A549 (cell line): ENCODE measurements at regions of chr19 and their contacts with region 1.

Region 1: DNA sequence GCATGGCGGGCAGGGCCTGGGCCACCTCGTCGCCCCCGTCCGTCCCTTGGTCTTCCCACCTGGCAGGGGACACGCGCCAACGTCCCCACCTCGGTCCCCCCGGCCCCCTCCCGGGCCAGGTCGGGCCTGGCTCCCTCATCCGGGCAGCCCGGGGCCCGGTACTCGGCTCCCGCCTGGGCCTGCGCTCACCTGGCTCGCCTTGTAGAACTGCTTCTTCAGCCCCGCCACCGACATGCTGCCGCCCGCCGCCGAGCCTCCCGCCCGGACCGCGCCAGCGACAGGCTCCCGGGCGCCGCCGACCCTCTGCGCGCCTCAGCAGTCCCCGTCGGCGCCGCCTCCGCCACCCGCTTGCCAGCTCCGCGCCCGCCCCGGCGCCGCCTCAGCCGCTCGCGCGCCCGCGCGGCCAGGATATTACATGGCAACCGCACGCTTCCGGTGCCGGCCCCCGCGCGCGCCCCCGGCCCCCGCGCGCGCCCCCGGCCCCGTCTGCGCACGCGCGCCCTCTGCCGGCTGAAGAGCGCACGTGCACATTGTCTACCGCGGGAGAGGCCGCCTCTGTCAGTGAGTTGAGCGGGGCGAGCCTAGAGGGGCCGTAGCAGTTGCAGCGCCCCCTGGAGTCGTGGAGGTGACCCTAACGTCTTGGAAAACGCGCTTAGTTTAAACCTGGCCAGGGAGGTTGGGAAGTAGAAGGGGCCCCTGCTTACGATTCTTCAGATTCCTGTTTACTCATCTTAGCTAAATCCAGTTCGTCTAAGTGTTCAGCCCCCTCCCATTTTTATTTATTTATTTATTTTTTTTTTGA is at the start of gene SH3GL1:
- DNase-seq: peak; percentile 69 to 94
- ATAC-seq: peak; percentile 68 to 78
- H3K4me3 ChIP-seq: peak within 1 kb of the TSS; percentile 77
- H3K27ac ChIP-seq: peak within 1 kb of the TSS; percentile 88 to 99
- H3K4me1 ChIP-seq: peaks cover 26% of the 10 kb centered on the region
- CTCF ChIP-seq: peak; percentile 99
- EP300 ChIP-seq: no peak
- POLR2A ChIP-seq: peak; percentile 53
- RAD21 ChIP-seq: peak; percentile 39 to 68; a peak in 4 of 5 replicates
- polyA plus RNA-seq, gene SH3GL1: 18.2 and 20.1 TPM in 2 replicates

Region 2: DNA sequence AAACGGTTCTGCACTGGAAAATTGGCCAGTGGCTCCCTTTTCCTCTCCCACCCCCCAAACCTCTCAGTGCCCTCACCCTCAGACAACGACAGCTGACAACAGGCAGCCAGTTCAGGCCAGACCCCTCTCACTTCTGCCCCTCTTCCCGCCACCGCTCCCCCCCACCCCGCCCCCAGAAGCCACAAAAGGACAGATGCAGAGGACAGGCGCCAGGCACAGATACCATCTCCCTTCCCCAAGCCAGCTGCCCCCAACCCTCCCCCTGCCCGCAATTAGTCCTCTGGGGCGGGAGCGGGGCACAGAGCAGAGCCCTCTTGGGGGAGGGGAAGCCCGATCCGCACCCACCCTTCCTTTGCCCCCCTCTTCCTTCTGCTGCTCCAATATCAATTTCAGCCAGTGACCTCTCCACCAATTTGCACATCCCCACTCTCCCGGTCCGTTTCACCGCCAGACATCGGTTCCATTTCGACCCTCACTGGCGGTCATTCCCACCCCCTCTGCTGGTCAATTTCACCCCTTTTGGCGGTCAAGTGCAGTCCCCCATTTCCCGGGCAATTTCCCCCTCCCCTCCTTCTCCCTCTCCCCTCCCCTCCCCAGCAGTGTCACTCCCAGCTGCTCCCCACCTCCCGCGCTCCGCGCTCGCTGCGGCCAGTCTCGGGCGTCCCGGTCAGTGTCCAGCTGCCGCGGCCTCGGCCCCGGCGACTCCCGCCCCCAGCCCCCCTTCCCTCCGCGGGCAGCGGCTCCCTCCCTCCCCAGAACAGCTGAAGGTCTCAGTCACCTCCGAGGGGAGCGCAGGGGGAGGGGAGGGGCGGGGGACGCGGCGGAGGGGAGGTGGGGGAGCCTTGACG is 121.7 kb before region 1 on chr19 and contains the start of gene SHD:
- CTCF ChIA-PET with region 1: no interaction called
- POLR2A ChIA-PET with region 1: no interaction called
- DNase-seq: no peak
- ATAC-seq: peak; percentile 36 to 48; a peak in 2 of 6 replicates
- H3K4me3 ChIP-seq: peak within 1 kb of the TSS; percentile 47
- H3K27ac ChIP-seq: peak within 1 kb of the TSS in 1 of 2 experiments; percentile 67; a peak in 3 of 6 replicates
- H3K4me1 ChIP-seq: peaks cover 2% of the 10 kb centered on the region; the same call in 1 of the 3 replicates
- CTCF ChIP-seq: no peak
- EP300 ChIP-seq: no peak
- POLR2A ChIP-seq: no peak
- RAD21 ChIP-seq: no peak
- polyA plus RNA-seq, gene SHD: 0.08 and 0.29 TPM in 2 replicates

Region 3: DNA sequence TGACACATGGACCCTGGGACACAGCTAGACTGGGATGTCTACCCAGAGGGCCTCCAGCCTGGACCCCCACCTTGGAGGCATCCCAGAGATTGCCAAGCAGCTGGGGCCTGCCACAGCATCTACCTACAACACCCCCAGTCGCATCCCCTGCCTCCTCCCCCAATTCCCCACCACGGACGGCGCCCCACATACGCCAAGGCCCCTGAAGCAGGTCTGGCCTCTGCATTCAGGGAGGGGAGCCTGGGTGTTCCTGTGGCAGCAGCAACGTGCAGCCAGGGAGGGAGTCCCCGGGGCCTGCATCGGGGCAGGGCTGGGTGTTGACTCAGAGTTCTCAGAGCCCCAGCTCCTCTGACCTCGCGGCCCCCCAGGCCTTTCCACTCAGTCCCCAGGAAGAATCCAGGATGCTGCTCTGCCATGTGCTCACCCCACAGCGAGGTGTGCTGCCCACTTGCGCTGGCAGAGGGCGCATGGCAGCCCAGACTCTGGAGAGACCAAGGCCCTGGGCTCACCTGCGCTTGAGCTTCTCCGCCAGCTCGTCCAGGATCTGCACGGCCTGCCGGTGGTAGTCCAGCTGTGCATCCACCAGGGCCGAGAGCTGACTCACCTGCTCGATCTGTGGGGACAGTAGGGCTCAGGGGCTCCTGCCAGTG is 37.4 kb before region 1 on chr19:
- CTCF ChIA-PET with region 1: interaction called, 51 read pairs
- POLR2A ChIA-PET with region 1: no interaction called
- DNase-seq: peak in 1 of 2 experiments; percentile 47
- ATAC-seq: peak; percentile 48 to 68; a peak in 5 of 6 replicates
- H3K4me3 ChIP-seq: no peak overlapping the region
- H3K27ac ChIP-seq: peak overlapping the region in 1 of 2 experiments; percentile 59; a peak in 2 of 6 replicates
- H3K4me1 ChIP-seq: peaks cover 14% of the 10 kb centered on the region
- CTCF ChIP-seq: peak; percentile 32; the same call in 2 of the 3 replicates
- EP300 ChIP-seq: no peak
- POLR2A ChIP-seq: no peak
- RAD21 ChIP-seq: peak; percentile 17 to 19; a peak in 1 of 5 replicates

Region 4: GRCh38 chr19:4375164-4376027 is 24.9 kb before region 1 on chr19:
- CTCF ChIA-PET with region 1: interaction called, 45 read pairs
- POLR2A ChIA-PET with region 1: interaction called, 4 read pairs
- DNase-seq: peak in 1 of 2 experiments; percentile 60
- ATAC-seq: peak; percentile 48 to 68
- H3K4me3 ChIP-seq: no peak overlapping the region
- H3K27ac ChIP-seq: peak overlapping the region; percentile 99
- H3K4me1 ChIP-seq: peaks cover 68% of the 10 kb centered on the region
- CTCF ChIP-seq: no peak
- EP300 ChIP-seq: no peak
- POLR2A ChIP-seq: no peak
- RAD21 ChIP-seq: no peak

Region 5: DNA sequence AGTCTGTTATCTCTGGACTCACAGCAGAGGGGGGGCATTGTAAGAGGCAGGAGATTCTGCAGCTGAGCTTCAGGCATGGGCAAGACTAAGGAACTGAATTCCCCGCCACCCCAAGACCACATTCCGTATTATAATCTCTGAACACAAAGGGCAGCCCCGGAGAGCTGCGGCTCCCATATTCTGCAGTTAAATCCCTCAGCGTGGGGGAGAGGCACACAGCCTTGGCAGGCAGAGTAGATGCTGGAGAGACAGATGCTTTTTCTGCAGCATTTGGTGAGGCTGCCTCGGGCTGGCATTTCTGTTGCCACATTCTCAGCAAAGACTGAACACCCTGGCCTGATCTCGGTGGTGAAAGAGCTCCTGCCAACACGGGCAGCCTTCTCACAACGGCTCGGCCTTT is 15.0 kb after region 1 on chr19:
- CTCF ChIA-PET with region 1: interaction called, 28 read pairs
- POLR2A ChIA-PET with region 1: interaction called, 4 read pairs
- DNase-seq: no peak
- ATAC-seq: no peak; a peak in 1 of 6 replicates
- H3K4me3 ChIP-seq: no peak overlapping the region
- H3K27ac ChIP-seq: no peak overlapping the region
- H3K4me1 ChIP-seq: peaks cover 9% of the 10 kb centered on the region; the same call in 1 of the 3 replicates
- CTCF ChIP-seq: no peak
- EP300 ChIP-seq: no peak
- POLR2A ChIP-seq: no peak
- RAD21 ChIP-seq: no peak

Region 6: GRCh38 chr19:4429771-4430171 is 29.4 kb after region 1 on chr19:
- CTCF ChIA-PET with region 1: interaction called, 11 read pairs
- POLR2A ChIA-PET with region 1: no interaction called
- DNase-seq: no peak
- ATAC-seq: no peak
- H3K4me3 ChIP-seq: no peak overlapping the region
- H3K27ac ChIP-seq: no peak overlapping the region
- H3K4me1 ChIP-seq: no peaks in the 10 kb centered on the region
- CTCF ChIP-seq: no peak
- EP300 ChIP-seq: no peak
- POLR2A ChIP-seq: no peak
- RAD21 ChIP-seq: no peak

Region 7: DNA sequence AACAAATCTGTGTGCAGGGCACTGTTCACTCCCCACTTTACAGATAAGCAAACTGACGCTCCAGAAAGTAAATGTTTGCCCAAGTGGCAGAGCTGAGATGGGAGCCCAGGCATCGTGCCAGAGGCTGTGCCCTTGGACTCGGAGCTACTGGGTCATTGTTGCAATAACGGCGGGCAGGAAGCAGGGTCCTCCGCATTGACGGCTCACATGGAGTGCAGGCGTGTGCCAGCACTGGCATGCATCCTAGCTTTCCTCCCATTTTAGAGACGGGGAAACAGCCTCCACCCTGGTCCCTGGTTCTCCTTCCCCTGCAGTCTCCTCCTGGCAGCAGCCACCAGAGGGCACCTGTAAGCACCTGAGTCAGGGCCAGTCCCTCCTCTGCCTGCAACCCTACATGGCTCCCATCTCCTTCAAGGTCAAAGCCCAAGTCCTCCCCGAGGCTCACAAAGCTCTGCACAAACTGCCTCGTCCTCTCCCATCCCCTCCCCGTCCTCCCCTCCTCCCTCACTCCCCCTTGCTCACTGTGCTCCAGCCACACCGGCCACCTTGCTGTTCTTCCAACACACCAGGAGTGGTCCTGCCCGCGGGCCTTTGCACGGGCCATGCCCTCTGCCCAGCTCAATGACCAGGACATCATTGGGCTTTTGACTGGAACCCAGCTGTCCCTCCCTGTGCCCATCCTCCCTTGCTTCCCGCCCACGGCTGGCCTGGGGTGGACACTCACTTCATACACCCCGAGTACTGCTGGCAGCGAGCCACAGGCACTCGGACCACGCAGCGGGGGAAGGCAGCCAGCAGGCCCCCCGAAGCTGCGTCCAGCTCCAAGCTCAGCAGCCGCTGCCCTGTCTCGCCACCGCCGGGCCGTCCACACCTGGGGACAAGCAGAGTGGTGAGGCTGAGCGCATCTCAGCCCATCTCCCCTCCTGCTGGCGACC is 147.2 kb after region 1 on chr19:
- CTCF ChIA-PET with region 1: no interaction called
- POLR2A ChIA-PET with region 1: no interaction called
- DNase-seq: peak in 1 of 2 experiments; percentile 59
- ATAC-seq: peak; percentile 67 to 85
- H3K4me3 ChIP-seq: no peak overlapping the region
- H3K27ac ChIP-seq: no peak overlapping the region
- H3K4me1 ChIP-seq: peaks cover 4% of the 10 kb centered on the region; the same call in 1 of the 3 replicates
- CTCF ChIP-seq: peak; percentile 36
- EP300 ChIP-seq: no peak
- POLR2A ChIP-seq: no peak
- RAD21 ChIP-seq: no peak